Sigmoid colon (tissue), 7 donors: ENCODE measurements at regions of chr18 and their contacts with region 1.

Region 1: GRCh38 chr18:3593904-3594661 is 144.1 kb downstream of the TGIF1 start:
- DNase-seq: peak; percentile 95
- H3K4me3 ChIP-seq: peak overlapping the region; percentile 28 to 51 (median 48)
- H3K27ac ChIP-seq: peak overlapping the region; percentile 87 to 98 (median 94)
- H3K4me1 ChIP-seq: peaks cover 0 to 53% (median 44%) of the 10 kb centered on the region in 4 donors
- H3K27me3 ChIP-seq: no peaks in the 10 kb centered on the region
- CTCF ChIP-seq: peak; percentile 74 to 95 (median 92)
- EP300 ChIP-seq: peak; percentile 44 to 91 (median 68)
- POLR2A ChIP-seq: peak in 1 of 2 donors; percentile 71

Region 2: GRCh38 chr18:3261371-3262246 is 332.5 kb before region 1 on chr18 and contains the start of gene MYL12B:
- intact Hi-C with region 1: loop called (anchors 5 kb)
- DNase-seq: peak; percentile 86
- H3K4me3 ChIP-seq: peak within 1 kb of the TSS; percentile 72 to 99 (median 81)
- H3K27ac ChIP-seq: peak within 1 kb of the TSS; percentile 88 to 94 (median 90)
- H3K4me1 ChIP-seq: peaks cover 0 to 60% (median 55%) of the 10 kb centered on the region in 4 donors
- H3K27me3 ChIP-seq: no peaks in the 10 kb centered on the region
- CTCF ChIP-seq: no peak
- EP300 ChIP-seq: no peak
- POLR2A ChIP-seq: peak; percentile 76 to 83
- total RNA-seq, gene MYL12B: 155 to 227 (median 181) TPM

Region 3: DNA sequence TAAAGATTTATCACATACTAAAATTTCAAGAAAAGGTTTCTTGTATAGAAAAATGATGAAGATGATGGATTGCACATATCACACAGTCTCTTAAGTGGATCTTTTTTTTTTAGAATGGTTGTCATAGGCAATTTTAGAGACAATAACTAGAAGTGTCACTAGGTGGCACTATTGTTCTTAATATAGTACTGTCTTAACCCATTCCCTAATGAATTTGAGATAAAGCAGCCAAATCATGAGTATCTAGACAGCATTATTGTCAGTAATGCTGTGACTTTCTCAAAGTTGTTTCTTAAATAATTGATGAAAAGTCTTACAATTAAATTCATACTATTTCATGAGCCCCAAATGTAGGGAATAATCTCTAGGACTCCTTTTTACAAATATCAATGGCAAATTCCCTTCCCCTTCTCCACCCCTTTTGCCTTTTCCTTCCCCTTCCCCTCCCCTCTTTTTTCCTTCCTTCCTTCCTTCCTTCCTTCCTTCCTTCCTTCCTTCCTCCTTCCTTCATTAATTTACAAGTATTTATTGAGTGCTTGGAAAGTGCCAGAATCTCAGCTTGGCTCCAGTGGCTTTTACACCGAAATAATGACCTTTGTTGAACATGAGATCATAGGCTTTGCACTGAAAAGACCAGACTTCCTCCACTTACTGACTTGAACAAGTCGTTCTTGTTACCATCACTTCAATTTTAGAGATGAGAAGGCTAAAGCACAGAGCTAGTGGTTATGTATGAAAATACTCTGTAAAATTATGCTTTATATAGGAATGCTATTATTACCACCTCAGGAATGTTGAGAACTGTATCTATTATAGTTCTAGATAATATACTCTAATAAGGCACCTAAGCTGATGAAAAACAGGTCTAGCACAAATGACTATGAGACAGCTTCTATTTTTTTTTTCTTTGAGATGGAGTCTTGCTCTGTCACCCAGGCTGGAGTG is 312.4 kb before region 1 on chr18:
- intact Hi-C with region 1: loop called (anchors 2 kb)
- DNase-seq: no peak
- H3K4me3 ChIP-seq: no peak overlapping the region
- H3K27ac ChIP-seq: peak overlapping the region in 3 of 4 donors; percentile 24 to 36 (median 34)
- H3K4me1 ChIP-seq: no peaks in the 10 kb centered on the region
- H3K27me3 ChIP-seq: no peaks in the 10 kb centered on the region
- CTCF ChIP-seq: peak; percentile 42 to 61 (median 53)
- EP300 ChIP-seq: no peak
- POLR2A ChIP-seq: no peak

Region 4: GRCh38 chr18:3345885-3346284 is 248.2 kb before region 1 on chr18:
- intact Hi-C with region 1: loop called (anchors 5 kb)
- DNase-seq: peak; percentile 76
- H3K4me3 ChIP-seq: no peak overlapping the region
- H3K27ac ChIP-seq: peak overlapping the region; percentile 41 to 56 (median 50)
- H3K4me1 ChIP-seq: peaks cover 0 to 12% (median 9%) of the 10 kb centered on the region in 4 donors
- H3K27me3 ChIP-seq: no peaks in the 10 kb centered on the region
- CTCF ChIP-seq: no peak
- EP300 ChIP-seq: no peak
- POLR2A ChIP-seq: no peak

Region 5: DNA sequence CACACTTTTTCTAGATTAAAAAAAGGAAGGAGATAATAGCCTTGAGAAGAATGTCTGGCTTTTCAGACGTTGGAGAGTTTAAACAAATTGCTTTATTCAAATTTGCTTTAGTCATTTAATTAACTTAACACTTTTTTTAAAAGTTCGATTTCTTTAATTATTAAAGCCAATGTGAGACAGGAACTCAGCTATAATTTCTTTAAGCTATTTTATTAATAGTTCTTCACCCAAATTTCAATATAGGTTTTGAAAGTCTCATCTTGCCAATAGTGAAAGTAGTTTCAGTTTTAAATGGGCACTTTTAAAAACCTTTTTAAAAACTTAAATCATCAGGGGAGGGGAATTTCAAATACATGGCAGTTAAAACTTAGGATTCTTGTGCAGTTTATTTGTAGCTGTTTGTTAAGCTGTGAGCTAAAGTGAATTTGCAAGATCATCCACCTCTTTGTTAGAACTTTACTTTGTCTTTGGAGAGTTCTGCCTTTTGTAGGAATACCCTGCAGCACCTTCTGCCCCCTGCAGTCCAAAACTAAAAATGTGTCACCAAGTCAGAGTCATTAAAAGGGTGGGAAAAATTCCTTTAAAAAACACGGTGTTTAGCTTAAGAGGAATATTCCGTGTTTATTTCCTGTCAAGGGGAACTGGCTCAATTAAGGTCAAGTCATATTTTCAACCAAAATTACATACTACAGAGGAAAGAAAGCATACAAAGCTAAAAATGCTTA is 139.6 kb before region 1 on chr18:
- intact Hi-C with region 1: loop called (anchors 2 kb)
- DNase-seq: no peak
- H3K4me3 ChIP-seq: peak overlapping the region in 3 of 4 donors; percentile 67 to 81 (median 74)
- H3K27ac ChIP-seq: peak overlapping the region; percentile 97 to 100 (median 99)
- H3K4me1 ChIP-seq: peaks cover 0 to 55% (median 33%) of the 10 kb centered on the region in 4 donors
- H3K27me3 ChIP-seq: no peaks in the 10 kb centered on the region
- CTCF ChIP-seq: peak in 3 of 4 experiments; percentile 69 to 73 (median 71)
- EP300 ChIP-seq: no peak
- POLR2A ChIP-seq: no peak